ENCODE measurements at regions of chr19 and their contacts with region 1.

Region 1: DNA sequence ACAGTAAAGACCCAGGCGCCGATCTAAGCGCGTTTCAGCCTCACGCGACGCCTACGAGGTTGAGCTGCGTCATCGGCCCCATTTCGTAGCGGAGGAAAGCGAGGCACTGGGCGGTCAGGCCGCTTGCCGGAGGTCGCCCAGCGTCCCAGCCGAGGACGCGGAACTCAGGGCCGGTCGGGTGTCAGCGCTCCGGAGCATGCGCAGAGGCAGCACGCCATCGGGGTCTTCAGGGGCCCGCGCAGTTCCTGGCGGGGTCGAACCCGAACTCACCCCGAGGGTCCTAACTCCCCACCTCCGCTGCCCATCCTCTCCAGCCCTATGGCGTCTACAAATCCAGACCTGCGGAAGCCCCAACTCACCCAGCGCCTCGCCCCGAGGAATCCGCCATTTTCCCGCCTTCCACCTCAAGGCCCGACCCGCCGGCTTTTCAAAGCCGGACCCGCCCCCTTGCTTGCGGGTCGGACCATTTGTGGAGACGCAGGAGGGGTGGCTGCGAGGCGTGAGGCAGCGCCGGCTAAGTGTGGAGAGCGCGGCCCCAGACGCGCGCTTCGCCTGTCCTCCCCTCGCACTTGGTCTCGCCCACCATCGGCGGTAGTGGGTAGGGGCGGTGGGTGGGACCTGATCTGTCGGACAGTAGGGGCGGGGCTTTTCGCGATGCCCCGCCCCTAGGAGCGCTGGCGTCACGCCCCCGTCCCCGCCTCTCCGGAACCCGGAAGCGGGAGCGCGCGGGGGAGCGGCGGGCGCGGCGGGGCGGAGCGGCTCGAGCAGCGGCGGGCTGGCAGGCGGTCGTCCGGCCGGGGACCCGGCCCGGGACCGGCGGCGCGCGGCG is at the starts of genes HAUS8 and MYO9B:
- DNase-seq: peak; percentile 96 to 100
- H3K4me3 ChIP-seq: peak within 1 kb of the TSS; percentile 91 to 97
- H3K27ac ChIP-seq: peak within 1 kb of the TSS; percentile 94 to 98
- H3K4me1 ChIP-seq: peaks cover 5 to 29% of the 10 kb centered on the region in 2 donors
- H3K27me3 ChIP-seq: no peaks in the 10 kb centered on the region
- CTCF ChIP-seq: no peak
- total RNA-seq, gene HAUS8: 4.3 TPM
- total RNA-seq, gene MYO9B: 182 TPM

Region 2: DNA sequence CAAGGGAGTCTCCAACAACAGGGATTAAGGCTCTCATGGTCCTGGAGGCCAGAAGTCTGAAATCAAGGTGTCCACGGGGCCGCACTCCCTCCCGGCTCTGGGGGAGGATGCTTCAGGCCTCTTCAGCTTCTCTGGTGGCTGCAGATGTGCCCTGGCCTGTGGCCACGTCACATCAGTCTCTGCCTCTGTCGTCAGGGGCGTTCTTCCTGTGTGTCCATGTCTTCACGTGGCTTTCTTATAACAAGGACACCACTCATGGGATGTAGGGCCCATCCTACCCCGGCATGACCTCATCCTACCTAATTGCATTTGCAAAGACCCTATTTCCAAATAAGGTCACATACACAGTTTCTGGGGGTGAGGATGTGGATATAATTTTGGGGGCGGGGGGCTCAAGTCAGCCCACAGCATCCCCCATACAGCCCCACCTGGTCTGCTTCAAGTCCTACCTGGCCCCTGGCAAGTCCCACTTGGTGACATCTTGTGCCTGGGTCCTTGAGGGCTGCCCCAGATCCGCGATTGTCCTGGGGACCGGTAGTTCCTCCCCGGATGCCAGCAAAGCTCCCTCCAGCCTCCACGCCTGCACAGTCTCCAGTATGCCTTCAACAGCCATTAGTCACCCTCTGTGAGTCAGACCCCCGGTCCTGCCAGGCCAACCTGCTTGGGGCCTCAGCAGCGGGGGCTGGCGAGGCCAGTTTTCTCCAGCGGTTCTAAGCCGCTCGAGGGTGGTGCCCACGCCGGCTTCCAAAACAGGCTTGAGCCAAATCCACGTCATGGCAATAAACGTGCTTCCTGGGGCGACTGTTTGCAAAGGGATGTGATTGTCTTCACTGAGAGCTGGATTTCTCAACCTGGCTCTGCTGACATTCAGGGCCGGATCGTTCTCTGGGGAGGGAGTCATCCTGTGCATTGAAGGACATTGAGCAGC is 32.5 kb after region 1 on chr19:
- intact Hi-C with region 1: loop called (anchors 1 kb)
- DNase-seq: peak; percentile 94 to 99
- H3K4me3 ChIP-seq: peak overlapping the region; percentile 1 to 34
- H3K27ac ChIP-seq: peak overlapping the region; percentile 91 to 94
- H3K4me1 ChIP-seq: peaks cover 18 to 29% of the 10 kb centered on the region in 2 donors
- H3K27me3 ChIP-seq: no peaks in the 10 kb centered on the region
- CTCF ChIP-seq: no peak

Region 3: GRCh38 chr19:17135001-17135853 is 60.0 kb after region 1 on chr19:
- intact Hi-C with region 1: loop called (anchors 1 kb)
- DNase-seq: peak; percentile 94 to 99
- H3K4me3 ChIP-seq: peak overlapping the region; percentile 39 to 46
- H3K27ac ChIP-seq: peak overlapping the region; percentile 94 to 97
- H3K4me1 ChIP-seq: peaks cover 23 to 46% of the 10 kb centered on the region in 2 donors
- H3K27me3 ChIP-seq: no peaks in the 10 kb centered on the region
- CTCF ChIP-seq: peak in 2 of 3 experiments; percentile 11 to 48

Region 4: GRCh38 chr19:17226002-17226933 is 151.0 kb after region 1 on chr19 and contains the start of gene OCEL1:
- intact Hi-C with region 1: loop called (anchors 5 kb)
- DNase-seq: peak; percentile 90 to 99
- H3K4me3 ChIP-seq: peak within 1 kb of the TSS; percentile 73 to 80
- H3K27ac ChIP-seq: peak within 1 kb of the TSS; percentile 88 to 92
- H3K4me1 ChIP-seq: peaks cover 0 to 8% of the 10 kb centered on the region in 2 donors
- H3K27me3 ChIP-seq: no peaks in the 10 kb centered on the region
- CTCF ChIP-seq: no peak
- total RNA-seq, gene OCEL1: 13.7 TPM